ENCODE measurements at regions of chr13 and their contacts with region 1.

Region 1: DNA sequence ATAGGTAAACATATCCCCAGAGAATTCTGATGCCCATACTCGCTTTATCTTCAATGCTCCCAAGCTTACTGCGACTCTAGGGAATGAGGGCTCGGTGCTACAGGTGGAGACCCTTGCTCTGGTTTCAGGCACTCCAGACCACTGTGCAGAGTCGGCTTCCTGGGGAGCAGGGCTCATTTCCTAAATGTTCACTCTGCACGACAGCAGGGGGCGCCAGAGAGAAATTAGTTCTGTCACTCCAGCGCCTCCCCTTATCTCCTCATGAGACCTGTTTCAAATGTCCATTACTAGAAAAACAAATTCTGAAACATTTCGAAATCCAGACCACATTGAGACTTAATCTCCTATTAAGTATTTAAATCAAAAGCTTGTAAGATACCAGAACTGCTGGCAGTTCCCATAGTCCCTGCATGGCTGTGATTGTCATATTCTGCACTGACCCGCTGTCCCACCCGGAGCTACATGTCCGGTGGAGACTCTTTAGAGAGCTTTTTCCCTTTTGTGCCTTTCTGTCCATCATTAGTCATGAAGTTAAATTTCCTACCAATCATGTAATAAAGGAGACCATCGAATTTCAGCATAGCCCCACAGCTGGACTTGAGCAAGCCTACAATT is 22.4 kb downstream of the EPSTI1 start:
- DNase-seq: peak; percentile 88
- ATAC-seq: peak; percentile 84
- H3K4me3 Mint-ChIP-seq: no peak overlapping the region
- H3K27ac Mint-ChIP-seq: no peak overlapping the region
- H3K4me1 Mint-ChIP-seq: peaks cover 13% of the 10 kb centered on the region
- H3K27me3 Mint-ChIP-seq: no peaks in the 10 kb centered on the region
- CTCF ChIP-seq: peak; percentile 90

Region 2: DNA sequence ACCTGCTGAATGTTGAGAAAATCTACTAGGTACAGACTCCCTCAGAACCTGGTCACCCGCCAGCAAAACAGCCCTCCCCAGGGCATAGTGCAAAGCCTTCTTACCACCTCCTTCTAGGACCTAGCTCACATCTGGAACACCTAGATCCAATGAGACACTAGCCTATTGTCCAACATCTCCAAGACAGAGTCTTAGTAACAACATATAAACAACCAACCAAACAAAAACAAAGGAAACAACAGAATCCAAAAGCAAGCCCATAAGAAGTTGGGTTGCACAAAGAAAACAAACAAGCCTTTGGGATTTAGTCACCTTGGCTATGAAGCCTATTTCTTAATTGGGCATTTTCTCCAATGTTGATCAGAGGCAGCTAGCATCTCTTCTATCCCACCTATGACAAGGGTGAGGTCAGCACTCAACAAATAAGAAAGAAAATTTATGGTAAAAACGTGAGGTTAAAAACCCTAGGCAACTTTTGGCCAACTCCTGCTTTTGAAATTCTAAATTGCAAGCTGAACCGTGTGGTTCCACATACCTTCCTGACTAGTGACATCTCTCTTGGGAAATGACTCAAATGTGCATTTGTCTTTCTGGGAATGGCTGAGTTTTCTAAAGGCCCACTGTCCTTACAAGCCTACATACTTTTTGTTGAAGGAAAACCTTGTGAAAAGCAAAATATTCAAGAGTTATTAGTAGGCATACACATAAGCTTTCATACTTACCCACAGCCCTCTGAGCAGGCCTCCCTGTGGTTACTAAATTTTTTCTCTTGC is 121.6 kb before region 1 on chr13:
- CTCF ChIA-PET with region 1: no interaction called
- POLR2A ChIA-PET with region 1: no interaction called
- intact Hi-C with region 1: no loop called
- DNase-seq: no peak
- ATAC-seq: no peak
- H3K4me3 Mint-ChIP-seq: no peak overlapping the region
- H3K27ac Mint-ChIP-seq: no peak overlapping the region
- H3K4me1 Mint-ChIP-seq: no peaks in the 10 kb centered on the region
- H3K27me3 Mint-ChIP-seq: peaks cover 10% of the 10 kb centered on the region
- CTCF ChIP-seq: no peak

Region 3: GRCh38 chr13:42959615-42960014 is 10.1 kb before region 1 on chr13:
- CTCF ChIA-PET with region 1: interaction called, 26 read pairs
- POLR2A ChIA-PET with region 1: no interaction called
- intact Hi-C with region 1: no loop called
- DNase-seq: no peak
- ATAC-seq: no peak
- H3K4me3 Mint-ChIP-seq: no peak overlapping the region
- H3K27ac Mint-ChIP-seq: no peak overlapping the region
- H3K4me1 Mint-ChIP-seq: no peaks in the 10 kb centered on the region
- H3K27me3 Mint-ChIP-seq: no peaks in the 10 kb centered on the region
- CTCF ChIP-seq: no peak

Region 4: GRCh38 chr13:42991892-42992763 is 22.5 kb after region 1 on chr13 and contains the start of gene EPSTI1:
- CTCF ChIA-PET with region 1: interaction called, 22 read pairs
- POLR2A ChIA-PET with region 1: interaction called, 7 read pairs
- intact Hi-C with region 1: no loop called
- DNase-seq: peak; percentile 84
- ATAC-seq: peak; percentile 82
- H3K4me3 Mint-ChIP-seq: peak within 1 kb of the TSS; percentile 84
- H3K27ac Mint-ChIP-seq: peak within 1 kb of the TSS; percentile 97
- H3K4me1 Mint-ChIP-seq: peaks cover 43% of the 10 kb centered on the region
- H3K27me3 Mint-ChIP-seq: no peaks in the 10 kb centered on the region
- CTCF ChIP-seq: no peak
- total RNA-seq, gene EPSTI1: 8.4 to 9.7 TPM

Region 5: DNA sequence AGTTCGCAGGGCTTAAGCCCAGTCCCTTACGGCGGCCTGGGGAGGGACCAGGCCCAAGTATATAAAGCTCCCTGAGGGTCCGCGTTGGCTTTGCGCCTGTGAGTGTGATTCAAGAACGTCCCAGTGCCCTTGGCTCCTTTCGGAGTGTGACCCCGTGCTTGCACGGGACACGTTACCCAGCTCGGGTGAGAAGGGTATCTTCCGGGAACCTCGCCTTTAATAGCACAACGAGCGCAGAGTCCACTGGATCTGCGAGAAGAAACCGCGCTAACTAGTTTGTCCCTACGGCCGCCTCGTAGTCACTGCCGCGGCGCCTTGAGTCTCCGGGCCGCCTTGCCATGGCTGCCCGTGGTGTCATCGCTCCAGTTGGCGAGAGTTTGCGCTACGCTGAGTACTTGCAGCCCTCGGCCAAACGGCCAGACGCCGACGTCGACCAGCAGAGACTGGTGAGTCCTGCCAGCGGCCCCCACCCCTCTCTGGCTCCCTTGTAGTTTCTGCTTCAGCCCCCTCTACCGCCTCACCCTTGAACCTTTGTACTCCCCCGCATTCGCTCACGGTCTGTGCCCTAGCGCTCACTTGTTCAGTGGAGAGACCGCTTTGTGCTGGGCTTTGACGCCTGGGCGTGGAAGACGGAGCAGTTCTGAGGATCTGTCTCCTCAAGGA is 53.8 kb after region 1 on chr13 and contains the start of gene DNAJC15:
- CTCF ChIA-PET with region 1: interaction called, 15 read pairs
- POLR2A ChIA-PET with region 1: no interaction called
- intact Hi-C with region 1: no loop called
- DNase-seq: peak; percentile 86
- ATAC-seq: peak; percentile 93
- H3K4me3 Mint-ChIP-seq: peak within 1 kb of the TSS; percentile 97
- H3K27ac Mint-ChIP-seq: peak within 1 kb of the TSS; percentile 94
- H3K4me1 Mint-ChIP-seq: peaks cover 27% of the 10 kb centered on the region
- H3K27me3 Mint-ChIP-seq: no peaks in the 10 kb centered on the region
- CTCF ChIP-seq: no peak
- total RNA-seq, gene DNAJC15: 8.9 to 10.6 TPM

Region 6: GRCh38 chr13:43153436-43154097 is 183.9 kb after region 1 on chr13:
- CTCF ChIA-PET with region 1: no interaction called
- POLR2A ChIA-PET with region 1: no interaction called
- intact Hi-C with region 1: no loop called
- DNase-seq: no peak
- ATAC-seq: no peak
- H3K4me3 Mint-ChIP-seq: no peak overlapping the region
- H3K27ac Mint-ChIP-seq: no peak overlapping the region
- H3K4me1 Mint-ChIP-seq: no peaks in the 10 kb centered on the region
- H3K27me3 Mint-ChIP-seq: no peaks in the 10 kb centered on the region
- CTCF ChIP-seq: no peak

Region 7: GRCh38 chr13:43878892-43879754 is 909.5 kb after region 1 on chr13 and contains the start of gene CCDC122:
- CTCF ChIA-PET with region 1: no interaction called
- POLR2A ChIA-PET with region 1: no interaction called
- intact Hi-C with region 1: loop called (anchors 10 kb)
- DNase-seq: peak; percentile 78
- ATAC-seq: peak; percentile 86
- H3K4me3 Mint-ChIP-seq: peak within 1 kb of the TSS; percentile 82
- H3K27ac Mint-ChIP-seq: peak within 1 kb of the TSS; percentile 88
- H3K4me1 Mint-ChIP-seq: peaks cover 28% of the 10 kb centered on the region
- H3K27me3 Mint-ChIP-seq: peaks cover 22% of the 10 kb centered on the region
- CTCF ChIP-seq: no peak
- total RNA-seq, gene CCDC122: 1.6 to 2.1 TPM